Heart right ventricle (tissue), 16 donors: ENCODE measurements at regions of chr7 and their contacts with region 1.

Region 1: DNA sequence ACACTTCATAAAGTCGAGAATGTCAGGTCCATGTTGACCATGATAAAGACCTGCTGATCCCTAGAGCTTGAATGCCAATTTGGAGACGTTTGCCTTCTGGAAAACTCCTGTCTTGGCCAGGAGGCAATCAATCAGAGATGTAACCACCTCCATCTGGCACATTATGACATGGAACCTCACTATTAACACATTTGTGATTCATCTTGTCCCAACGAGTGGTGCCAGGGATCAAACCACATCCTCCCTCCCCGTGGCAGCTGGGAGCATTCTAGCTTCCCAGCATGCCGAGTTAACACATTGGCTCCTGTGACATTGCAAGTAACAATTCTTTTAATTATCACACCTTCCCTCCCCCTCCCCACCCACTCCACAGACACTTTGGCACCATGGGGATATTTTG is 84.0 kb upstream of the PPP1R17 start:
- DNase-seq: no peak
- ATAC-seq: no peak
- H3K4me3 ChIP-seq: no peak overlapping the region
- H3K27ac ChIP-seq: no peak overlapping the region
- H3K4me1 ChIP-seq: no peaks in the 10 kb centered on the region
- H3K27me3 ChIP-seq: no peaks in the 10 kb centered on the region
- CTCF ChIP-seq: no peak

Region 2: DNA sequence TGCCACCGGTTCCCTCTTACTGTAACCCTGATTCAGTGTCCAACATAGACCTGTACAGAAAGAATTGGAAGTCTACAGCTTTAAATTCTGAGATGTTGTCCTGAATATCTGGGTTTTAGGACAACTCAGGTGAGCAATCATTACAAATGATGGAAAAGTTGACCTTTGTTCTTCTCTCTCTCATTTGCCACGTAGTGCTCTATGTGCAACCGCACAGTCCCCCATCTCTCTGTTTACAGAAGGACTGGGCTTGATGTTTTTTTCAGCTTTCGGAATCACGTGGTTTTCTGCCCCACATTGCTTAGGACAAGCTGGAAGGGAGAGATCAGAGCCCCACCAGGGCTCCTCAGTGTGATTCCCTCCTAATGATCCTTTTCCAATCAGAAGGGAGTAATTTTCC is 284.7 kb before region 1 on chr7:
- intact Hi-C with region 1: no loop called
- DNase-seq: no peak
- ATAC-seq: no peak
- H3K4me3 ChIP-seq: no peak overlapping the region
- H3K27ac ChIP-seq: no peak overlapping the region
- H3K4me1 ChIP-seq: no peaks in the 10 kb centered on the region
- H3K27me3 ChIP-seq: peaks cover 0 to 45% (median 5%) of the 10 kb centered on the region in 7 donors
- CTCF ChIP-seq: no peak

Region 3: GRCh38 chr7:31663072-31663471 is 60.0 kb after region 1 on chr7:
- intact Hi-C with region 1: loop called in 1 of 10 experiments (anchors 10 kb)
- DNase-seq: no peak
- ATAC-seq: no peak
- H3K4me3 ChIP-seq: no peak overlapping the region
- H3K27ac ChIP-seq: no peak overlapping the region
- H3K4me1 ChIP-seq: peaks cover 0 to 7% (median 0%) of the 10 kb centered on the region in 9 donors
- H3K27me3 ChIP-seq: no peaks in the 10 kb centered on the region
- CTCF ChIP-seq: no peak